ENCODE measurements at regions of chr16 and their contacts with region 1.

Region 1: DNA sequence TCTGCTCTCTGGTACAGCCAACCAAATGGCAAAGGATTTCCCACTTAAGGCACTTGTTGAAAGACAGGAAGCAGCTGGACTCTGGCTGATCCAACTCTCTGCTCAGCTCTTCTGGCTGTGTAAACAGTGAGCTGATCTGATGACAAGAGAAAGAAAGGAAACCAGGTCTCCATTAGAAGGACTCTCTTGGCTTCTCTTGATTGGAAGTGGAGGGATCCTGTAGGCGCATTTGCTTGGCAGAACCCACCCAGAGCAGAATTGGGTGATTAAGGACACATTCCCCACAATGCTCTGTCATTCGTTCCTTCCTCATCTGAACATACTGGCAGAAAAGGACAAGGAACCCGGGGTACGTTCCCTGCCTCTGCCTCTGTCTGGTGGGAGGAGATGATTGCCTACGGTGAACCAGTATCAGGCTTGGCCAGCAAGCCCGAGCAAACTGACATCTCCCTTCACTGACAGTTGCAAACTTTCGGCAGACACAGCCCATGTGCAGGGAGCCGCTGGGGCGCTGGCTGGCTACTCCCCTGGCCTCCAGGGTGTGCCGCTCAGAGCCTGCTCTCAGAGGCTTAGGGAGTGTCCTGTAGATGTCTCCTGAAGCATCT is 29.1 kb downstream of the LDHD start:
- DNase-seq: peak; percentile 96
- H3K4me3 ChIP-seq: no peak overlapping the region
- H3K27ac ChIP-seq: peak overlapping the region; percentile 45
- H3K4me1 ChIP-seq: peaks cover 26% of the 10 kb centered on the region
- H3K27me3 ChIP-seq: no peaks in the 10 kb centered on the region
- CTCF ChIP-seq: no peak
- POLR2A ChIP-seq: peak; percentile 71

Region 2: GRCh38 chr16:75074920-75075687 is 12.4 kb before region 1 on chr16:
- CTCF ChIA-PET with region 1: interaction called, 4 read pairs
- POLR2A ChIA-PET with region 1: no interaction called
- dilution Hi-C with region 1: no loop called
- intact Hi-C with region 1: loop called (anchors 1 kb)
- DNase-seq: peak; percentile 56
- H3K4me3 ChIP-seq: no peak overlapping the region
- H3K27ac ChIP-seq: peak overlapping the region; percentile 35
- H3K4me1 ChIP-seq: peaks cover 13% of the 10 kb centered on the region
- H3K27me3 ChIP-seq: no peaks in the 10 kb centered on the region
- CTCF ChIP-seq: no peak
- POLR2A ChIP-seq: no peak

Region 3: DNA sequence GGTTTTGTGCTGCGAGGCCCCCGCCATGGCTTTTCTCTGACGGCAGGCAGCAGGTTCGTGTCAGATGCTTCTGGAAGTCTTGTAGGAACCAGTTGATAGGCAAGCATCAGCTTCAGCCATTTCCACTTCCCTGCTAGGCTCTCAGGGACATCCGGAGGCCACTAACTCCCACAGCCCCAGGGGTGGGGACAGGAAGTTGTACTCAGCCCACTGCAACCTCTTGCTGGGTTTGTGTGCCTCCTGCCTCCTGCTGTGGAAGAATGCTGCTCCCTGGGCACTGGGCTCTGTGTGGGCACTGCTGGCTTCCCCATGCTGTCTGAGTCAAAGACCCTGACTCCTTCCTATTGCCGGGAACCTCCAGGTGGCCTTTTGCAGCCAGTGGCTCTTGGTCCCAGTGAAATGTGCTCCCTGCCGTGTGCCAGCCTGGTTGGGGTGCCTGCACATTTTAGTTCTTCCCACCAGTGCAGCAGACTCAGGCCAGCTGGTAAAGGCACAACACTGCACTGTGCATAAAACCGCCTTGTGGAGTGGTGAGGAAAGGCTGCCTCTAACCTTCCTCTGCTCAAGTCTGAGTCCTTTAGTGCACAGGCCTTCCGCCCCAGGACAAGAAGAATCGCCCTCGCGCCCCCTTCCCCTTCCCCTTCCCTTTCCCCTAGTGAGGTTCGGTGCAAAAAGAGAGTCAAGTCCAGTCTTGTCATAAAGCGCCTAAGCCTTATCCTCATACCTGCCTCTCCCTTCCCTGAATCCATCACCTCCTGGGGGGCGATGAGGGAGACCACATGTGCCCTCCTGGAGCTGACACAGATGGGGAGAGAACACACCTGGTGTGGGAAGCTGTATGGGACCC is 12.5 kb after region 1 on chr16:
- CTCF ChIA-PET with region 1: interaction called, 15 read pairs
- POLR2A ChIA-PET with region 1: no interaction called
- dilution Hi-C with region 1: no loop called
- intact Hi-C with region 1: no loop called
- DNase-seq: peak; percentile 39
- H3K4me3 ChIP-seq: no peak overlapping the region
- H3K27ac ChIP-seq: no peak overlapping the region
- H3K4me1 ChIP-seq: peaks cover 12% of the 10 kb centered on the region
- H3K27me3 ChIP-seq: no peaks in the 10 kb centered on the region
- CTCF ChIP-seq: no peak
- POLR2A ChIP-seq: no peak

Region 4: GRCh38 chr16:75234856-75235696 is 147.6 kb after region 1 on chr16:
- CTCF ChIA-PET with region 1: no interaction called
- POLR2A ChIA-PET with region 1: no interaction called
- dilution Hi-C with region 1: no loop called
- intact Hi-C with region 1: no loop called
- DNase-seq: no peak
- H3K4me3 ChIP-seq: no peak overlapping the region
- H3K27ac ChIP-seq: no peak overlapping the region
- H3K4me1 ChIP-seq: peaks cover 6% of the 10 kb centered on the region
- H3K27me3 ChIP-seq: no peaks in the 10 kb centered on the region
- CTCF ChIP-seq: no peak
- POLR2A ChIP-seq: no peak